HepG2 (cell line): ENCODE measurements at regions of chr10 and their contacts with region 1.

Region 1: DNA sequence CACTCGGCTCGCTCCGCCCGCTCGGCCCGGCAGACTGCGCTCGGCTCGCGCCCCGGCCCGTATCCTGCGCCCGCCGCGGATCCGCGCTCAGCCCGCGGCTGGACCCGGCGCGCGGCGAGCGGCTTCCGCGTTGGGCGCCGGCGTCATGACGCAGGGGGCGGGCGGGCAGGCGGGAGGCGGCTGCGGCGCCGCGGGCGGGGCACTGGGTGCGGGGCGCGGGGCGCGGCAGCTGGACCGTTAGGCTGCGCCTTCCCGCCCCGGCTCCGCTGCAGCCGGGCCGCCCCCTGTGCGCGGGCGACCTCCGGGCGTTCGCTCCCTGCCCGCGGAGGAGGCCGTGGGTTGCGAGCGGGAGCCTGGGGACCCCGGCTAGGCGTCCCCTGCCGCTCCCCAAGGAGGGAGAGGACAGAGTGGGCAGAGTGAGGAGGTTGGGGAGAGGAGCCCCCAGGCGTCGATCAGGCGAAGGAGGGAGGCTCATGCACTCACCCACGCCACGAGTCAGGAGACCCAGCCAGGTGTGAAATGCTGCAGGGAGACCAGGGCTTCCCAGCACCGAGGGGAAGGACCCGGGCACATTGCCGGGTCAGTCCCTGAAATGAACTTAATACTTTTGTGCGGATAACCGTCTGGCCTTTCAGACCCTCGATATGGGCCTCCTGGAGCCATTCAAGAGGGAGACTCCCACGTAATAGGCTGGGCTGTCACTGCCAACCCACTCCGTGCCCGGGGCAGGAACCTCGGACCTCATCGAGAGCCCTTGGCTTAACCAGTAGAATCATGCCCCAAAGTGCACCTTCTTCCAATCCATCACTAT is at the start of gene PIP4K2A:
- DNase-seq: peak; percentile 25
- ATAC-seq: peak; percentile 86
- H3K4me3 ChIP-seq: peak within 1 kb of the TSS; percentile 85 to 98 (median 87)
- H3K27ac ChIP-seq: peak within 1 kb of the TSS; percentile 54
- H3K4me1 ChIP-seq: peaks cover 41% of the 10 kb centered on the region
- H3K27me3 ChIP-seq: peaks cover 1 to 3% of the 10 kb centered on the region in 2 experiments; a peak in 3 of 5 replicates
- CTCF ChIP-seq: no peak
- EP300 ChIP-seq: no peak
- POLR2A ChIP-seq: 0 out of 4 replicates have a peak, but pooled peaks of 1 of the 2 experiments have one; percentile 51
- RAD21 ChIP-seq: 0 out of 2 replicates have a peak, but pooled peaks have one; percentile 17
- total RNA-seq, gene PIP4K2A: 22.6 and 25.7 TPM in 2 replicates

Region 2: GRCh38 chr10:22606164-22606614 is 108.5 kb before region 1 on chr10:
- CTCF ChIA-PET with region 1: no interaction called
- POLR2A ChIA-PET with region 1: no interaction called
- in situ Hi-C with region 1: loop called (anchors 10 kb)
- intact Hi-C with region 1: no loop called
- DNase-seq: peak; percentile 84
- ATAC-seq: peak; percentile 81
- H3K4me3 ChIP-seq: no peak overlapping the region
- H3K27ac ChIP-seq: no peak overlapping the region
- H3K4me1 ChIP-seq: peaks cover 9% of the 10 kb centered on the region; the same call in 1 of the 2 replicates
- H3K27me3 ChIP-seq: no peaks in the 10 kb centered on the region
- CTCF ChIP-seq: no peak
- EP300 ChIP-seq: no peak
- POLR2A ChIP-seq: no peak
- RAD21 ChIP-seq: no peak

Region 3: GRCh38 chr10:22620140-22620857 is 94.4 kb before region 1 on chr10:
- CTCF ChIA-PET with region 1: no interaction called
- POLR2A ChIA-PET with region 1: no interaction called
- in situ Hi-C with region 1: no loop called
- intact Hi-C with region 1: loop called (anchors 1 kb)
- DNase-seq: no peak
- ATAC-seq: no peak
- H3K4me3 ChIP-seq: no peak overlapping the region
- H3K27ac ChIP-seq: no peak overlapping the region
- H3K4me1 ChIP-seq: peaks cover 90% of the 10 kb centered on the region
- H3K27me3 ChIP-seq: no peaks in the 10 kb centered on the region
- CTCF ChIP-seq: no peak
- EP300 ChIP-seq: no peak
- POLR2A ChIP-seq: no peak
- RAD21 ChIP-seq: no peak

Region 4: DNA sequence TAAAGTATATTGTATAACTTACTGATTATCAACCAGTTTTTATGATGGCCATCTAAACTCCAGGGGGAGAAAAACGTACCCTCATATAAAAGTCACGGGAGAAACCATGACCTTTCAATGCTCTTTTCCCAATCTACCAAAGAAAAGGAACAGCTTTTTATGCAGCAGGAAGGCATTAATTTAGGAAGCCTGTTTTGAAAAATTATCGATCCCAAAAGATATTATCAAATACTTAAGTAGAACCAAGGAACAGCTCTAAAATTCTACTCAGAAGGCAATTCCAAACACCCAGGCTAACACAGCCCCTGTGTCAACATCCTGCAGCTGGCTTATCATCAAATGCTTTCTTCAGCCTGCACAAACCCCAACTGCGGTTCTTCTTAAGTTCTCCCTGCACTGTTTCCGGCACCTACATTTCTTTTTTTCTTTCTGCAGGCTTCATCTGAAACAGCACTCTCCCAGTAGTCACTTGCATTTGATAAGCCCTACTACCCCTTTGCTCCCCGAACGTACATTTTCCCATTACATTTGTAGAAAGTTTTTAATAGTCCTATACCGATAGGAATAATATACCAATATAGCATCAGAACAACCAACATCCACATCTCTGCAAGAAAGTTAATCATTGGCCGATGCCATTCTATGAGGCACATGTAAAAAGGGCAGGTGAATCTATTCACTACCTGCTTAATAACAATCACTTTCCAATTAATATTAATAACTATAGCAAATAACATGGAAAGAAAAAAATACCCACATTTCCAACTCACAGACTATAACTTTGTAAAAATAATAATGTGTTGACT is 48.2 kb before region 1 on chr10:
- CTCF ChIA-PET with region 1: no interaction called
- POLR2A ChIA-PET with region 1: no interaction called
- in situ Hi-C with region 1: no loop called
- intact Hi-C with region 1: loop called (anchors 10 kb)
- DNase-seq: peak; percentile 18
- ATAC-seq: peak; percentile 56
- H3K4me3 ChIP-seq: peak overlapping the region in 2 of 3 experiments; percentile 16 to 20; a peak in 2 of 6 replicates
- H3K27ac ChIP-seq: no peak overlapping the region
- H3K4me1 ChIP-seq: peaks cover 58% of the 10 kb centered on the region
- H3K27me3 ChIP-seq: no peaks in the 10 kb centered on the region
- CTCF ChIP-seq: no peak
- EP300 ChIP-seq: no peak; a peak in 1 of 4 replicates
- POLR2A ChIP-seq: no peak
- RAD21 ChIP-seq: no peak

Region 5: GRCh38 chr10:22682237-22683139 is 32.2 kb before region 1 on chr10:
- CTCF ChIA-PET with region 1: no interaction called
- POLR2A ChIA-PET with region 1: no interaction called
- in situ Hi-C with region 1: no loop called
- intact Hi-C with region 1: loop called (anchors 2 kb)
- DNase-seq: peak; percentile 69
- ATAC-seq: peak; percentile 61
- H3K4me3 ChIP-seq: peak overlapping the region; percentile 31 to 58 (median 43); a peak in 5 of 6 replicates
- H3K27ac ChIP-seq: peak overlapping the region; percentile 76
- H3K4me1 ChIP-seq: peaks cover 75% of the 10 kb centered on the region
- H3K27me3 ChIP-seq: no peaks in the 10 kb centered on the region
- CTCF ChIP-seq: no peak
- EP300 ChIP-seq: 0 out of 4 replicates have a peak, but pooled peaks of 1 of the 2 experiments have one; percentile 30
- POLR2A ChIP-seq: no peak
- RAD21 ChIP-seq: no peak

Region 6: GRCh38 chr10:23015021-23015707 is 300.5 kb after region 1 on chr10:
- CTCF ChIA-PET with region 1: no interaction called
- POLR2A ChIA-PET with region 1: no interaction called
- in situ Hi-C with region 1: no loop called
- intact Hi-C with region 1: no loop called
- DNase-seq: no peak
- ATAC-seq: no peak
- H3K4me3 ChIP-seq: no peak overlapping the region
- H3K27ac ChIP-seq: no peak overlapping the region
- H3K4me1 ChIP-seq: no peaks in the 10 kb centered on the region
- H3K27me3 ChIP-seq: no peaks in the 10 kb centered on the region; a peak in 1 of 5 replicates
- CTCF ChIP-seq: no peak
- EP300 ChIP-seq: no peak
- POLR2A ChIP-seq: no peak
- RAD21 ChIP-seq: no peak